Aorta (tissue), 5 donors: ENCODE measurements at regions of chr17 and their contacts with region 1.

Region 1: DNA sequence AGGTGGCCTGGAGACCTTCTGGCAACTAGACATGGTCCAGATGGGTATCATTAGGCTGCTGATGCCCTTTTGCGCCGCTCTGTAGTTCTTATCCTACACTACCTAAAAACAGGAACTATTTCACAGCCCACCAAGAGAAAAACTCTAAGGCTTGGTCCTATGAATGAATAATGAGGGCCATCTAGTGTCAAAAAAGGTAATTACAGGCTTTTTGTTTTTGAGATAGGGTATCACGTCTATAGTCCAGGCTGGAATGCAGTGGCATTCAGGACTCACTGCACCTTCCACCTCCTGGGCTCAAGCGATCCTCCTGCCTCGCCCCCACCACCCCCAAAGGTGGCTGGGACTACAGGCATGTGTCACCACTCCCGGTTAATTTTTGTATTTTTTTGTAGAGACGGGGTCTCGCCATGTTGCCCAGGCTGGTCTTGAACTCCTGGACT is 20.9 kb downstream of the COIL start:
- DNase-seq: no peak
- ATAC-seq: peak; percentile 62
- H3K4me3 ChIP-seq: no peak overlapping the region
- H3K27ac ChIP-seq: no peak overlapping the region
- H3K4me1 ChIP-seq: no peaks in the 10 kb centered on the region
- H3K27me3 ChIP-seq: no peaks in the 10 kb centered on the region

Region 2: GRCh38 chr17:56819431-56820145 is 120.3 kb before region 1 on chr17:
- intact Hi-C with region 1: loop called (anchors 2 to 5 kb)
- DNase-seq: peak in 1 of 2 donors; percentile 55
- ATAC-seq: peak; percentile 87
- H3K4me3 ChIP-seq: no peak overlapping the region
- H3K27ac ChIP-seq: no peak overlapping the region
- H3K4me1 ChIP-seq: no peaks in the 10 kb centered on the region
- H3K27me3 ChIP-seq: no peaks in the 10 kb centered on the region

Region 3: DNA sequence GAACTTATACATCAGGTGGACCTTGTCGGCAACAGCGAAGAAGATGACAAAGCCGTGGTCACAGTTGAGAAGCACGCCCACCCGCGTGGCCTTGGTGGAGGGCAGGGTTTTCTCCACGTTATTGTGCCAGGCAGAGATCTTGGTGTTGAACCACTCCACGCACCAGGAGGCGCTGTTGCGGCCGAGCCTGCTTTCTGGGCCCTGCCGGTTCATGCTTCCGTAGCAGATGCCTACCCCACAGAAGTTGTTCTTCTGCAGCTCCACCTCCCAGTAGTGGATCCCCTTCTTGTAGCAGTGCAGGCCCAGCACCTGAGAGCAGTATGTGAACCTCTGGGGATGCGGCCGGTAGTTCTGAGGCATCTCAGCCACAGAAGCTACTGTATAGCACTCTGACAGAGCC is 48.1 kb before region 1 on chr17:
- intact Hi-C with region 1: loop called (anchors 5 kb)
- DNase-seq: peak; percentile 55 to 86
- ATAC-seq: no peak
- H3K4me3 ChIP-seq: no peak overlapping the region
- H3K27ac ChIP-seq: no peak overlapping the region
- H3K4me1 ChIP-seq: no peaks in the 10 kb centered on the region
- H3K27me3 ChIP-seq: no peaks in the 10 kb centered on the region